WTC11 (cell line): ENCODE measurements at regions of chr12 and their contacts with region 1.

Region 1: DNA sequence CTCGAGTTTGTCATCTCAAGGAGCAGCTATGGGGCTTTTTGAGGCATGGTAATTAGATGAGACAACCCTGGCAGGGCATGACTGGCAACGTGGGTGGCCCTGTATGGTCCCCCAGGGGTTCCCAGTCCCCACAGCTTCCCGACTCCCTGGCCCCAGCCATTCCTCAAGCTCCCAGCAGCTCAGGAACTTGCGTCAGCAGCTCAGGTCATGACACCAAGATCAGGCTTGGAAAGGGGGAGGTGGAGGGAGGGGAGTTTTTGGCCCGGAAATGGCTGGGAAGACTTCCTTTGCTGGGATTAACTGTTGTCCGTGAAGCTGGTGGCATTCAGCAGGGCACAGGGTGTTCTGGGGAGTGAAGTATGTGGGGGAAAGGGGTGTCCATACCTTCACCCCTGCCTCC is 10.4 kb upstream of the NRIP2 start:
- DNase-seq: no peak
- ATAC-seq: no peak
- H3K4me3 Mint-ChIP-seq: no peak overlapping the region
- H3K27ac Mint-ChIP-seq: no peak overlapping the region
- H3K4me1 Mint-ChIP-seq: peaks cover 15% of the 10 kb centered on the region
- H3K27me3 Mint-ChIP-seq: no peaks in the 10 kb centered on the region
- CTCF ChIP-seq: no peak

Region 2: GRCh38 chr12:2336409-2336829 is 508.9 kb before region 1 on chr12:
- CTCF ChIA-PET with region 1: no interaction called
- POLR2A ChIA-PET with region 1: no interaction called
- DNase-seq: no peak
- ATAC-seq: no peak
- H3K4me3 Mint-ChIP-seq: no peak overlapping the region
- H3K27ac Mint-ChIP-seq: no peak overlapping the region
- H3K4me1 Mint-ChIP-seq: peaks cover 9% of the 10 kb centered on the region
- H3K27me3 Mint-ChIP-seq: no peaks in the 10 kb centered on the region; the same call in 1 of the 2 replicates
- CTCF ChIP-seq: no peak

Region 3: GRCh38 chr12:2555487-2556082 is 289.7 kb before region 1 on chr12:
- CTCF ChIA-PET with region 1: no interaction called
- POLR2A ChIA-PET with region 1: no interaction called
- DNase-seq: no peak
- ATAC-seq: peak; percentile 61
- H3K4me3 Mint-ChIP-seq: no peak overlapping the region
- H3K27ac Mint-ChIP-seq: no peak overlapping the region
- H3K4me1 Mint-ChIP-seq: no peaks in the 10 kb centered on the region
- H3K27me3 Mint-ChIP-seq: no peaks in the 10 kb centered on the region
- CTCF ChIP-seq: no peak

Region 4: GRCh38 chr12:2691006-2691344 is 154.3 kb before region 1 on chr12:
- CTCF ChIA-PET with region 1: interaction called, 10 read pairs
- POLR2A ChIA-PET with region 1: no interaction called
- DNase-seq: peak; percentile 72
- ATAC-seq: peak; percentile 86
- H3K4me3 Mint-ChIP-seq: peak overlapping the region; percentile 74
- H3K27ac Mint-ChIP-seq: no peak overlapping the region
- H3K4me1 Mint-ChIP-seq: peaks cover 27% of the 10 kb centered on the region
- H3K27me3 Mint-ChIP-seq: peaks cover 28% of the 10 kb centered on the region
- CTCF ChIP-seq: no peak

Region 5: GRCh38 chr12:2769871-2770533 is 75.3 kb before region 1 on chr12:
- CTCF ChIA-PET with region 1: no interaction called
- POLR2A ChIA-PET with region 1: no interaction called
- DNase-seq: no peak
- ATAC-seq: no peak
- H3K4me3 Mint-ChIP-seq: no peak overlapping the region
- H3K27ac Mint-ChIP-seq: no peak overlapping the region
- H3K4me1 Mint-ChIP-seq: peaks cover 12% of the 10 kb centered on the region
- H3K27me3 Mint-ChIP-seq: peaks cover 2% of the 10 kb centered on the region; the same call in 1 of the 2 replicates
- CTCF ChIP-seq: no peak

Region 6: DNA sequence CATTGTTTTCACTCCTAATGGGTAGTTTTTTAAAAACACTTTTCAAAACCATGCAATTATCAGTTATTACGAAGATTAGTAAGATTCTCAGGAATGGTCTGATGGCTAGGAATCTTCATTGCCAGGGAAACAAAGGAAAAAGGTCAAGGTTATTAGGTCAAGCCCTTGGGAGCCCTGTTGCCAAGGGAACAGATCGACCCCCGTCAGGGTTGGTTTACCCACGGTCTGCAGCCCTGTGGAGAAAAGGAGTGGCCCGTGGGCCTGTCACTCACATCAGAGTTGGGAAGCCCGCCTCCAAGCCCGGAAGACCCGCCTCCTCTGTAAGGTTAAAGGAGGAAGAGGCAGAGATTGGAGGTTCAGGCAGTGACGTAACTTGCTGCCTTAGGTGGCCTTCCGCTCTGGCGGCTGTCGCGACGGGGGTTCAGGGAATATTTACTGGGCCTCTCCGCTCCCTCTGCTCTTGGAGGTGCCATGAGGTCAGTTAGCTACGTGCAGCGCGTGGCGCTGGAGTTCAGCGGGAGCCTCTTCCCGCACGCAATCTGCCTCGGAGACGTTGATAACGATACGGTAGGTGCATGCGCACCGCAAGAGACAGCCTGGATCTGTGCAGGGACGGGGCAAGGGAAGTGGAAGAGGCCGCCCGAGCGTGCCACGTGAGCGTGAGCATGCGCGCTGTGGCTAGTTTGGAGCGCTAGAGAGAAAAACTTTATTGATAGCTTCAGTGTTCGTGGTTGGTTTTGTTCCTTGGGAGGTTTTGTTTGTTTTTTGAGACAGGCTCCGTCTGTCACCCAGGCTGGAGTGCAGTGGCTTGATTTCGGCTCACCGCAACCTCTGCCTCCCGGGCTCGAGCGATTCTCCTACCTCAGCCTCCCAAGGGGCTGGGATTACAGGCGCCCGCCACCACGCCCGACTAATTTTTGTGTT is 32.7 kb before region 1 on chr12 and contains the start of gene ITFG2:
- CTCF ChIA-PET with region 1: interaction called, 10 read pairs
- POLR2A ChIA-PET with region 1: interaction called, 6 read pairs
- DNase-seq: peak; percentile 99
- ATAC-seq: peak; percentile 99
- H3K4me3 Mint-ChIP-seq: peak within 1 kb of the TSS; percentile 99
- H3K27ac Mint-ChIP-seq: peak within 1 kb of the TSS; percentile 100
- H3K4me1 Mint-ChIP-seq: peaks cover 13% of the 10 kb centered on the region
- H3K27me3 Mint-ChIP-seq: no peaks in the 10 kb centered on the region
- CTCF ChIP-seq: no peak; the same call in 1 of the 2 replicates
- total RNA-seq, gene ITFG2: 23.9 to 26.0 TPM (median 25.4 TPM) in 3 replicates

Region 7: GRCh38 chr12:2877047-2877952 is 32.0 kb after region 1 on chr12 and contains the starts of genes FOXM1 and RHNO1:
- CTCF ChIA-PET with region 1: interaction called, 25 read pairs
- POLR2A ChIA-PET with region 1: interaction called, 5 read pairs
- DNase-seq: peak; percentile 94
- ATAC-seq: peak; percentile 77
- H3K4me3 Mint-ChIP-seq: peak within 1 kb of the TSS; percentile 99
- H3K27ac Mint-ChIP-seq: peak within 1 kb of the TSS; percentile 94
- H3K4me1 Mint-ChIP-seq: peaks cover 25% of the 10 kb centered on the region
- H3K27me3 Mint-ChIP-seq: no peaks in the 10 kb centered on the region
- CTCF ChIP-seq: no peak
- total RNA-seq, gene FOXM1: 99.6 to 118 TPM (median 100 TPM) in 3 replicates
- total RNA-seq, gene RHNO1: 48.0 to 50.3 TPM (median 49.5 TPM) in 3 replicates

Region 8: GRCh38 chr12:3004655-3005565 is 159.6 kb after region 1 on chr12:
- CTCF ChIA-PET with region 1: interaction called, 11 read pairs
- POLR2A ChIA-PET with region 1: no interaction called
- DNase-seq: no peak
- ATAC-seq: peak; percentile 40
- H3K4me3 Mint-ChIP-seq: no peak overlapping the region
- H3K27ac Mint-ChIP-seq: peak overlapping the region; percentile 82
- H3K4me1 Mint-ChIP-seq: peaks cover 20% of the 10 kb centered on the region
- H3K27me3 Mint-ChIP-seq: no peaks in the 10 kb centered on the region
- CTCF ChIP-seq: no peak

Region 9: GRCh38 chr12:3073438-3074250 is 228.4 kb after region 1 on chr12:
- CTCF ChIA-PET with region 1: interaction called, 18 read pairs
- POLR2A ChIA-PET with region 1: no interaction called
- DNase-seq: peak; percentile 92
- ATAC-seq: peak; percentile 48
- H3K4me3 Mint-ChIP-seq: no peak overlapping the region
- H3K27ac Mint-ChIP-seq: no peak overlapping the region
- H3K4me1 Mint-ChIP-seq: peaks cover 8% of the 10 kb centered on the region
- H3K27me3 Mint-ChIP-seq: peaks cover 19% of the 10 kb centered on the region
- CTCF ChIP-seq: peak; percentile 90